ENCODE measurements at regions of chr1 and their contacts with region 1.

Region 1: DNA sequence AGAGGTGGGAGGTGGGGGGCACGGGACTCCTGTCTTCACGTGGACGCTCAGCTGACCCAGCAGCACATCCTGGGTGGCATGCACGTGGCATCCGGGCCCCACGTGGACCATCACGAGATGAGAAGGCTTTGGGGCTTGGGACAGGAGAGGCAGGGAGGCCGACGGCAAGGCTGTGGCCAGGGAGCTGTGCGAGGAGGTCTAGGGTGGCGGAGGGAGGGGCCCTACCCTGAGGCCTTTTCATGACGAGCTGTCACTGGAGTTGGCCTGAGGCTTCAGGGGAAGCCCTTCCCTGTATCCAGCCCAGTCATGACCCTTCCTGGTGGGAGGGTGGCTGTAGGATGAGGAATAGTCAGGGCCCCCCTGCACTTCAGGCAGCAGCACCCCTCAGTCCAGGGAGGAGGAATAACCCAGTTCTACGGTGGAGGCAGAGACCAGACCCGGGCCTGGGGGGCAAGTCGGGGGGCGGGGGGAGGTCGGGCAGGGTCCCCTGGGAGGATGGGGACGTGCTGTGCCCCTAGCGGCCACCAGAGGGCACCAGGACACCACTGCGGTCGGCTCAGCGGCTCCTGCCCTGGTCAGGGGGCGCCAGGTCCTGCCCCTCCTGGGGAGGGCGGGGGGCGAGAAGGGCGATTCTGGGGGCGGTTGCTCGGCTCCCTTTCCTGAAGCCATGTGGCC is 2.0 kb upstream of the PERM1 start:
- DNase-seq: peak; percentile 73
- ATAC-seq: peak; percentile 95
- H3K4me3 ChIP-seq: no peak overlapping the region
- H3K4me3 Mint-ChIP-seq: no peak overlapping the region
- H3K27ac ChIP-seq: no peak overlapping the region
- H3K27ac Mint-ChIP-seq: no peak overlapping the region
- H3K4me1 ChIP-seq: peaks cover 0 to 3% of the 10 kb centered on the region in 2 donors
- H3K4me1 Mint-ChIP-seq: no peaks in the 10 kb centered on the region
- H3K27me3 ChIP-seq: peaks cover 0 to 22% (median 0%) of the 10 kb centered on the region in 4 experiments
- H3K27me3 Mint-ChIP-seq: peaks cover 38% of the 10 kb centered on the region
- CTCF ChIP-seq: peak; percentile 90

Region 2: GRCh38 chr1:1013105-1013921 is 29.4 kb after region 1 on chr1 and contains the start of gene ISG15:
- CTCF ChIA-PET with region 1: interaction called, 13 read pairs
- POLR2A ChIA-PET with region 1: no interaction called
- intact Hi-C with region 1: no loop called
- DNase-seq: peak; percentile 91
- ATAC-seq: peak; percentile 96
- H3K4me3 ChIP-seq: peak within 1 kb of the TSS; percentile 68 to 94 (median 75)
- H3K4me3 Mint-ChIP-seq: peak within 1 kb of the TSS; percentile 95
- H3K27ac ChIP-seq: peak within 1 kb of the TSS; percentile 88 to 93
- H3K27ac Mint-ChIP-seq: peak within 1 kb of the TSS; percentile 98
- H3K4me1 ChIP-seq: peaks cover 16 to 23% of the 10 kb centered on the region in 2 donors
- H3K4me1 Mint-ChIP-seq: peaks cover 27% of the 10 kb centered on the region
- H3K27me3 ChIP-seq: no peaks in the 10 kb centered on the region
- H3K27me3 Mint-ChIP-seq: peaks cover 6% of the 10 kb centered on the region
- CTCF ChIP-seq: no peak
- total RNA-seq, gene ISG15: 25.2 and 28.3 TPM in 2 replicates

Region 3: GRCh38 chr1:1291548-1292441 is 307.9 kb after region 1 on chr1:
- CTCF ChIA-PET with region 1: interaction called, 32 read pairs
- POLR2A ChIA-PET with region 1: no interaction called
- intact Hi-C with region 1: loop called (anchors 2 kb)
- DNase-seq: peak; percentile 87
- ATAC-seq: peak; percentile 84
- H3K4me3 ChIP-seq: no peak overlapping the region
- H3K4me3 Mint-ChIP-seq: no peak overlapping the region
- H3K27ac ChIP-seq: no peak overlapping the region
- H3K27ac Mint-ChIP-seq: peak overlapping the region; percentile 50
- H3K4me1 ChIP-seq: peaks cover 0 to 16% of the 10 kb centered on the region in 2 donors
- H3K4me1 Mint-ChIP-seq: peaks cover 11% of the 10 kb centered on the region
- H3K27me3 ChIP-seq: no peaks in the 10 kb centered on the region
- H3K27me3 Mint-ChIP-seq: no peaks in the 10 kb centered on the region
- CTCF ChIP-seq: peak; percentile 74